MCF 10A (cell line): ENCODE measurements at regions of chr1 and their contacts with region 1.

Region 1: DNA sequence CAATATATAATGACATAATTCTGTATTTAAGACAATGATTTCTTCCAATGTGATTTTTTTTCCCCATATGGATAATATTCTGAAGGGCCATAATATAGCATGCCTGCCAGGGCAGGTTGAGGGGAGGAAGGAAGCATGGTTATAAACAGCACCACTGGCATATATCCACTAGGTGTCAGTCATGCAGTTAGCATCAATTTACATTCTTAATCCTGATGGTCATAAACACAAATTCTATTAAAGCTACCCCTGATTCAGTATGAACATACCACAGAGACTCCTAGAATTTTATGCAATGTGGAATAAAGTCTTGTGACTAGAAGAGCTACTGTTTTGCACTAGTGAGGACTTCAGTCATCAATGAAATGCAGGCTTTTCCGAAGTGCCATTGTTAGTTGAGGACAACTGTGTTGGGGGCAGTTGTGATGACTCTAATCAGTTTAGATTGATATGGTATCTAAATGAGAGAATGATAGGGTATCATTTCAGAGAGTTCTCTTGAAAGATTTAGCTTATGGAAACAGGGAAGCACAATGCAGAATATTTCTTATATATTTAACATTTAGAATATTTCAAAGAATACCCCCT is 342.7 kb upstream of the NR5A2 start:
- DNase-seq: peak; percentile 82
- H3K4me3 Mint-ChIP-seq: no peak overlapping the region
- H3K27ac Mint-ChIP-seq: no peak overlapping the region
- H3K4me1 Mint-ChIP-seq: peaks cover 18% of the 10 kb centered on the region
- H3K27me3 Mint-ChIP-seq: no peaks in the 10 kb centered on the region
- CTCF ChIP-seq: peak; percentile 96

Region 2: GRCh38 chr1:199766219-199766792 is 81.5 kb after region 1 on chr1:
- CTCF ChIA-PET with region 1: no interaction called
- POLR2A ChIA-PET with region 1: no interaction called
- intact Hi-C with region 1: no loop called
- DNase-seq: no peak
- H3K4me3 Mint-ChIP-seq: no peak overlapping the region
- H3K27ac Mint-ChIP-seq: no peak overlapping the region
- H3K4me1 Mint-ChIP-seq: no peaks in the 10 kb centered on the region
- H3K27me3 Mint-ChIP-seq: no peaks in the 10 kb centered on the region
- CTCF ChIP-seq: no peak

Region 3: GRCh38 chr1:200029035-200029821 is 344.4 kb after region 1 on chr1:
- CTCF ChIA-PET with region 1: interaction called, 8 read pairs
- POLR2A ChIA-PET with region 1: no interaction called
- intact Hi-C with region 1: loop called (anchors 2 kb)
- DNase-seq: peak; percentile 65
- H3K4me3 Mint-ChIP-seq: peak overlapping the region; percentile 77
- H3K27ac Mint-ChIP-seq: peak overlapping the region; percentile 24
- H3K4me1 Mint-ChIP-seq: peaks cover 6% of the 10 kb centered on the region
- H3K27me3 Mint-ChIP-seq: no peaks in the 10 kb centered on the region
- CTCF ChIP-seq: no peak

Region 4: GRCh38 chr1:200139661-200140250 is 455.0 kb after region 1 on chr1:
- CTCF ChIA-PET with region 1: interaction called, 6 read pairs
- POLR2A ChIA-PET with region 1: no interaction called
- intact Hi-C with region 1: loop called (anchors 1 kb)
- DNase-seq: peak; percentile 81
- H3K4me3 Mint-ChIP-seq: no peak overlapping the region
- H3K27ac Mint-ChIP-seq: no peak overlapping the region
- H3K4me1 Mint-ChIP-seq: no peaks in the 10 kb centered on the region
- H3K27me3 Mint-ChIP-seq: no peaks in the 10 kb centered on the region
- CTCF ChIP-seq: peak; percentile 83

Region 5: DNA sequence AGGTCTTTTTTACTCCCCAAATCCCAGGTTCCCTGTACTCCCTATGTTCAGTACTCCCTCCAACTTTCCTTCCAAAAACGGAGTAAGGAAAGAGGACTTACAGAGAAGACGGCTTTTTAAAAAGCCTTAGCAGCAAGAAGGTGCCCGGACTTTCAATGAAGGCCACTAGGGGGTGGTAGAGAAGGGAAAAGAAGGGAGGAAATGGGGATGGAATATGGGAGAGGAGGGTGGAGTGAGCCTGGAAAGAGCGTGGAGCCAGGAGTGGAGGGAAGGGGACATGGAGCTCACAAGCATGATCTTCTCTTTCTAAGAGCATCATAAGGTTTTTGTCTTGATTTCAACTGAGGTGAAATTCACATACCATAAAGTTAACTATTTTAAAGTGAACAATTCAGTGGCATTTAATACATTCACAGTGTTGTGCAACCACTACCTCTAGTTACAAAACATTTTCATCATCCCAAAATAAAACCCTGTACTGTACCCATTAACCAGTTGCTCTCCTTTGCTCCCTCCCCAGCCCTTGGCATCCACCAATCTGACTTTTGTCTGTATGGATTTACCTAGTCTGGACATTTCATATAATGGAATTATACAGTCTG is 595.1 kb after region 1 on chr1:
- CTCF ChIA-PET with region 1: interaction called, 16 read pairs
- POLR2A ChIA-PET with region 1: interaction called, 4 read pairs
- intact Hi-C with region 1: loop called (anchors 1 kb)
- DNase-seq: peak; percentile 89
- H3K4me3 Mint-ChIP-seq: no peak overlapping the region
- H3K27ac Mint-ChIP-seq: no peak overlapping the region
- H3K4me1 Mint-ChIP-seq: peaks cover 7% of the 10 kb centered on the region
- H3K27me3 Mint-ChIP-seq: no peaks in the 10 kb centered on the region
- CTCF ChIP-seq: peak; percentile 88

Region 6: GRCh38 chr1:200409761-200410565 is 725.2 kb after region 1 on chr1 and contains the start of gene ZNF281:
- CTCF ChIA-PET with region 1: interaction called, 3 read pairs
- POLR2A ChIA-PET with region 1: no interaction called
- intact Hi-C with region 1: loop called (anchors 10 kb)
- DNase-seq: peak; percentile 97
- H3K4me3 Mint-ChIP-seq: peak within 1 kb of the TSS; percentile 94
- H3K27ac Mint-ChIP-seq: peak within 1 kb of the TSS; percentile 93
- H3K4me1 Mint-ChIP-seq: peaks cover 60% of the 10 kb centered on the region
- H3K27me3 Mint-ChIP-seq: no peaks in the 10 kb centered on the region
- CTCF ChIP-seq: no peak
- total RNA-seq, gene ZNF281: 22.3 and 24.8 TPM in 2 replicates